K562 (cell line): ENCODE measurements at regions of chr6 and their contacts with region 1.

Region 1: GRCh38 chr6:14001329-14002012 is 76.7 kb downstream of the RNF182 start:
- DNase-seq: no peak
- ATAC-seq: no peak
- H3K4me3 ChIP-seq: no peak overlapping the region
- H3K27ac ChIP-seq: no peak overlapping the region
- H3K4me1 ChIP-seq: no peaks in the 10 kb centered on the region
- H3K27me3 ChIP-seq: no peaks in the 10 kb centered on the region
- CTCF ChIP-seq: no peak
- EP300 ChIP-seq: no peak
- POLR2A ChIP-seq: no peak
- RAD21 ChIP-seq: no peak

Region 2: GRCh38 chr6:13924146-13924948 is 77.1 kb before region 1 on chr6:
- CTCF ChIA-PET with region 1: no interaction called
- POLR2A ChIA-PET with region 1: no interaction called
- in situ Hi-C with region 1: no loop called
- intact Hi-C with region 1: no loop called
- DNase-seq: peak; percentile 27 to 78 (median 47)
- ATAC-seq: peak; percentile 79
- H3K4me3 ChIP-seq: peak overlapping the region; percentile 60
- H3K27ac ChIP-seq: peak overlapping the region; percentile 77
- H3K4me1 ChIP-seq: peaks cover 14 to 47% of the 10 kb centered on the region in 2 experiments
- H3K27me3 ChIP-seq: no peaks in the 10 kb centered on the region
- CTCF ChIP-seq: no peak
- EP300 ChIP-seq: peak; percentile 20; the same call in 1 of the 2 replicates
- POLR2A ChIP-seq: peak; percentile 54
- RAD21 ChIP-seq: no peak

Region 3: GRCh38 chr6:13953061-13953705 is 48.3 kb before region 1 on chr6:
- CTCF ChIA-PET with region 1: no interaction called
- POLR2A ChIA-PET with region 1: no interaction called
- in situ Hi-C with region 1: no loop called
- intact Hi-C with region 1: loop called (anchors 1 kb)
- DNase-seq: no peak
- ATAC-seq: peak; percentile 63
- H3K4me3 ChIP-seq: no peak overlapping the region
- H3K27ac ChIP-seq: no peak overlapping the region
- H3K4me1 ChIP-seq: no peaks in the 10 kb centered on the region; a peak in 1 of 5 replicates
- H3K27me3 ChIP-seq: no peaks in the 10 kb centered on the region
- CTCF ChIP-seq: no peak
- EP300 ChIP-seq: no peak
- POLR2A ChIP-seq: no peak
- RAD21 ChIP-seq: no peak

Region 4: DNA sequence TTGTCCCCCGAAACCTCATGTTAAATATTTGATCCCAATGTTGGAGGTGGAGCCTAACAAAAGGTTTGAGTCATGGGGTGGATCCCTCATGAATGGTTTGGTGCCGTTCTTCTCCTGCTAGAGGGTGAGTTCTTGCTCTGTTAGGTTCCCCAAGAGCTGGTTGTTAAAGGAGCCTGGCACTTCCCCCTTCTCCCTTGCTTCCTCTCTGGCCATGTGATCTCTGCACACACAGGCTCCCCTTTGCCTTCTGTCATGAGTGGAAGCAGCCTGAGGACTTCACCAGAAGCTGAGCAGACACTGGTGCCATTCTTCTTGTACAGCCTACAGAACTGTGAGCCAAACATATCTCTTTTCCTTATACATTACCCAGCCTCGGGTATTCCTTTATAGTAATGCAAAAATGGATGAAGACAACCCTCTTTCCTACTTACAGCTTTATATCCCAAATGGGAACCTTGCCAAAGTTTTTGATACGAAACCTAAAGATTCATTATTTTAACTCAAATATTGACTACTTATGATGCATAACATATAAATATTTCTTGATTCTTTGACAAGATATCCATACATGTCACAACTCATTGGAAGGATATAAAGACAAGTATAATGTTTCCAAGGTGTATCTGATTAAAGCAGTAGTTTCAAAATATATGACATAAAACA is 15.7 kb before region 1 on chr6:
- CTCF ChIA-PET with region 1: no interaction called
- POLR2A ChIA-PET with region 1: interaction called, 30 read pairs
- in situ Hi-C with region 1: no loop called
- intact Hi-C with region 1: no loop called
- DNase-seq: peak in 1 of 4 experiments; percentile 53
- ATAC-seq: peak; percentile 47
- H3K4me3 ChIP-seq: peak overlapping the region; percentile 14
- H3K27ac ChIP-seq: peak overlapping the region; percentile 89
- H3K4me1 ChIP-seq: peaks cover 35 to 77% of the 10 kb centered on the region in 2 experiments
- H3K27me3 ChIP-seq: no peaks in the 10 kb centered on the region
- CTCF ChIP-seq: no peak
- EP300 ChIP-seq: 0 out of 2 replicates have a peak, but pooled peaks have one; percentile 29
- POLR2A ChIP-seq: peak; percentile 70
- RAD21 ChIP-seq: no peak